ENCODE measurements at regions of chr6 and their contacts with region 1.

Region 1: DNA sequence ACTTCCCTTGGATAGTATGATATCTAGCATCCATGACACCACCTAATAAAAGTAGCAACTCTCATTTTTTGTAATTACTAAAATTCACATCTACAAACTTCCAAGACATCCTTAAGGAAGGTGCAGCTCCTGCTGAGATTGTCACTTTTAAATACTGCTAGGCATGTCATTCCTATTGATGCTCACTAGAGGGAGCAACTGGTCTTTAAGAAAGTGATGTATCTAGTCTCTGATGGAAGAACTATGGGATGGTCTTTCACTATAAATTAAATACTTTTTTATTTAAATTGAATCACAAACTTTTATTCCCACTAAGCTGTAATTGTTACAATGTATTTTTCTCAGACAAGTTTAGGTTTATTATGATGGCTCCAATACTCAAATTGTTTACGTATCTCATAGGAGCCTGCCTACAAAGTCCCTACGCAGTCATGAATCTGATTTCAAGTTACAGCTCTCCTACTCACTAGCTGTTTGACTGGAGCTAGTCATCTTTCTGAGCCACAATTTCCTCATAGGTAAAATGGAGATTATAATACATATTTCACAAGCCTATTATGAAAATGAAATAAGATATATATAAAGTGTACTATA is 8.1 kb upstream of the TSPYL1 start:
- DNase-seq: no peak
- H3K4me3 Mint-ChIP-seq: no peak overlapping the region
- H3K27ac Mint-ChIP-seq: no peak overlapping the region
- H3K4me1 Mint-ChIP-seq: no peaks in the 10 kb centered on the region
- H3K27me3 Mint-ChIP-seq: no peaks in the 10 kb centered on the region

Region 2: GRCh38 chr6:116115781-116116180 is 172.0 kb before region 1 on chr6:
- CTCF ChIA-PET with region 1: no interaction called
- DNase-seq: no peak
- H3K4me3 Mint-ChIP-seq: no peak overlapping the region
- H3K27ac Mint-ChIP-seq: peak overlapping the region; percentile 37
- H3K4me1 Mint-ChIP-seq: no peaks in the 10 kb centered on the region
- H3K27me3 Mint-ChIP-seq: no peaks in the 10 kb centered on the region

Region 3: GRCh38 chr6:116180374-116180773 is 107.4 kb before region 1 on chr6:
- CTCF ChIA-PET with region 1: no interaction called
- DNase-seq: no peak
- H3K4me3 Mint-ChIP-seq: no peak overlapping the region
- H3K27ac Mint-ChIP-seq: no peak overlapping the region
- H3K4me1 Mint-ChIP-seq: no peaks in the 10 kb centered on the region
- H3K27me3 Mint-ChIP-seq: no peaks in the 10 kb centered on the region

Region 4: DNA sequence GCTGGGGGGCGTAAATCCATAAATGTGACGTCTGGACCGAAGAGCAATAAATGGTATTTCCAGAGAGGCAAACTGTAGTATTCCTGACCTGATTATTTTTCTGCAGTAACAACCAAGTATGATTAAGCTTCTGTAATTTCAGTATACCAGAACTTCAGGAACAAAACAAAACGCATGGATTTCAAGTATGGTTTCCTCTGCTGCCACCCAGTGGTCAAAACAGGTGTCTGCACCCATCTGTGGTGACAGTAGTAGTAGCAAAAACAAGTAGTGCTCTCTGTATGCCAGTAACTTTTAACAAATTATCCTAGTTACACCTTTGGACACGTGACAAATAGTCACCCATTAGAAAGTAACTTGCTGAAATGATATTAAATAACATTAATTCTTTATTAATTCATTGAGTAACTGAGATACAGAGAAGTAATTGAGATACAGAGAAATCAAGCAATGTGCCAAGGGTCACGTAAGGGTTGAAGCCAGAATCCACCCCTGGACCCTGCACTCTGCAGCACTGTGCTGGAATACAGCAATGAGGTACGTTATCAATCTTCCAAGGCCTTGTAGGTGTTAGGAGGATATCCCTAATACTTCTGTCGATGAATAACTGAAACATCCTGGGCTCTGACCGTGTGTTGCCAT is 273.7 kb after region 1 on chr6:
- CTCF ChIA-PET with region 1: interaction called, 27 read pairs
- DNase-seq: peak; percentile 81
- H3K4me3 Mint-ChIP-seq: no peak overlapping the region
- H3K27ac Mint-ChIP-seq: no peak overlapping the region
- H3K4me1 Mint-ChIP-seq: no peaks in the 10 kb centered on the region
- H3K27me3 Mint-ChIP-seq: peaks cover 28% of the 10 kb centered on the region